ENCODE measurements at regions of chr2 and their contacts with region 1.

Region 1: DNA sequence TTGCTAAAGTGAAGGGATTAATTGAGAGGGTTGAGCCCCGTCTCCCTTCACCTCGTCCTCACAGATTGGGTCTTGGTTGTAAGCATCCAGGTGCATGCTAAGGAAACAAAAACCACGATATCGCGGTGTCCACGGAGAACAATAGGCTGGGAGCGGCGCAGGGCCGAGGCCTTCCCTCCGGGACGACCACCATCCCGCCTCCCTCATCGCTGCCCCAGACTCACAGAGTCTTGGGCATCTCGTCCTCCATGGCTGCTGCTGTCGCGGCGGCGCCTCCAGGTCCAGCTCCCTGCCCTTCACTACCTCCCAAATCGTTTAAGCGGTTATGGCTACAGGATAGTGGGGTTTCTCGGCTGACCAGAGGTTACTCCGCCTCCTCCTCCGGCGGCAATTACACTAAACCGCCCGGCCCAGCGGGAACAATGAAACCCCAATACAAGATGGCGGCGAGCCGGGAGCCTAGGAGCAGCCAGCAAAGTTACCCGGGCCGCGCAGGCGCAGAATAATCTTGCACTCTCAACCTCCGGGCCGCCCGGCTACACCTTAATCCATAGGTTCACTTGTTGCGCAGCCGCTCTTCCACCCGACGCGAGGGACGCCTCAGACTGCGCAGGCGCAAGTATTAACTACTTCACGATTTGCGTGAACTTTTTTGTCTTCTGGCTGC is at the start of gene TIA1:
- DNase-seq: peak in 1 of 2 donors; percentile 98
- H3K4me3 ChIP-seq: peak within 1 kb of the TSS; percentile 83 to 94
- H3K27ac ChIP-seq: peak within 1 kb of the TSS; percentile 97
- H3K4me1 ChIP-seq: peaks cover 39% of the 10 kb centered on the region
- H3K27me3 ChIP-seq: no peaks in the 10 kb centered on the region
- CTCF ChIP-seq: no peak
- POLR2A ChIP-seq: peak in 1 of 2 donors; percentile 73
- total RNA-seq, gene TIA1: 79.8 TPM

Region 2: DNA sequence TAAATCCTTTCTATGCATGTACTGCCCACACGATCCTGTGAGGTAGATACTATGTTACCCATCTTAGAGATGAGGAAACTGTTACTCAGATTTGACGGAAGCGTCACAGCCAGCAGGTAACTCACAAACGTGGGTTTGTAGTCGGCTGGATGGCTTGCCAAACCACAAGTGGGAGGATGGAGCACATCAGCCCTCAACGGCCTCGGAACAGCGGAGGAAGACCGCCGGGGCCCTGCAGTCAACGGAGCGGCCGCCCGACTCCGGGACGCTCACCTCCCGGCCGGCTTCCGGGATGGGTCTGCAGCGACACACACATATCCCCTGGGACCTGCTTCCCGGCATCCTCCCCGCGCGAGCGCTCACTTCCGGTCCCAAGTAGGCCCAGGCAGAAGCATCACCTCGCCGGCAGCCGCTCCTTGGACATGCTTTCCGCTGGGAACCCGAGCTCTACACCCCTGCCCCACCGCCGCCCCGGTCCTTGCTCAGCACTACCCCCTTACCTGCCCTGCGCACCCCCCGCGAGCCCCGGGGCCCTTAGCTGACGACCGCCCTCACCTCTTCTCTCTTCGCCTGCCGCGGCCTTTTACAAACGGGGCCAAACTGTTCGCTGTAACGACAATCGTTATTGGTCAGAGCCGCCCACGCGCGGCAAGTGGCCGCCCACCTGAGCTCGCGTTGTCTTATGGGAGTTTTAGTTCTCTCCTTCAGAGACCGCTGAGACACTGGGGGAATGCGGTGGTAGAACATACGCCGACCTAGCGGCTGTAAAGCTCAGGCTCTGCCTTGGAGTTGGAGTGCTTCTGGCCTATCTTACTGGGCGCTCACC is 57.7 kb before region 1 on chr2 and contains the start of gene C2orf42:
- intact Hi-C with region 1: loop called (anchors 2 kb)
- DNase-seq: peak; percentile 97 to 99
- H3K4me3 ChIP-seq: peak within 1 kb of the TSS; percentile 65 to 88
- H3K27ac ChIP-seq: peak within 1 kb of the TSS; percentile 95
- H3K4me1 ChIP-seq: peaks cover 3% of the 10 kb centered on the region
- H3K27me3 ChIP-seq: no peaks in the 10 kb centered on the region
- CTCF ChIP-seq: no peak
- POLR2A ChIP-seq: peak in 1 of 2 donors; percentile 93
- total RNA-seq, gene C2orf42: 17.4 TPM

Region 3: DNA sequence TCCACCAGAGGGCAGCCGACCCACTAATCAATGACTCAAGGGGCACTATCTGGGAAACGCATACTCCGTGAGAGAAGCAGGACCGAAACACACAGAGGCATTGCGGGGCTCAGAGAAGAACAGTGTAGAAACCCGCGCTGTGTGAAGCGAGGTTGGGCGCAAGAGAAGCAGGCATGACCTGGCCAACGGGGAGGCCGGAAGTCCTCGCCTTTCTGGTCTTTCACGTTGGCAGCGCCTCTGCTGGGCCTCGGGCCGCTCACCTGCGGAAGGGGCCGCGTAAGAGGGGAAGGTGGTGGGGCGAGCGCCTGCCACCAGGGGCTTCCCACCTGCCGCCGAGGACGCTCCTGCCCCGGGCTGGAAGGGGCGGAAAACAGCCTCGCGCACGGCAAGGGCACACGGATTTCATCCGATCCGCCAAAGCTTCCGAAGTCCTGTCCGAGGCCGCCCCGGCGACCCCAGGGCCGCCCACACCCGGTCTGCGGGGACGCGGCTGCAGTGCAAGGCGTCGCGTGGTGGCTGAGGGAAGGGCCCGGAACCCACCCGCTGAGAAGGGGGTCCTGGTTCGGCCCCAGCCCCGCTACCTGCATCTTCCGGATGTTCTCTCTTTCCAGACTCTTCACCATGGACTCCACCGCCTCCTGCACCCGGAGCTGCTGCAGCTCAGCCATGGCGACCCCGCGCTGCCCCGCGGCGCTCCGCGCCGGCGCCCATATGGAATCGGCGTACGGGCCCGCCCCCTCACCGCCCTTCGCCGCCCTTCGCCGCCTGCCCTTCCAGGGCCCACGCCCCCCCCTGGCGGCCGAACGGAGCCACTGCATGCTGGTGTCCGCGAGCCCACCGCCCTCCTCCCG is 53.3 kb after region 1 on chr2 and contains the start of gene FAM136A:
- intact Hi-C with region 1: loop called (anchors 5 kb)
- DNase-seq: no peak
- H3K4me3 ChIP-seq: peak within 1 kb of the TSS; percentile 86 to 88
- H3K27ac ChIP-seq: peak within 1 kb of the TSS; percentile 84
- H3K4me1 ChIP-seq: peaks cover 11% of the 10 kb centered on the region
- H3K27me3 ChIP-seq: no peaks in the 10 kb centered on the region
- CTCF ChIP-seq: peak; percentile 92 to 99 (median 95)
- POLR2A ChIP-seq: no peak
- total RNA-seq, gene FAM136A: 12.5 TPM

Measured in vagina (tissue), 2 donors.